ENCODE measurements at regions of chr1 and their contacts with region 1.

Region 1: DNA sequence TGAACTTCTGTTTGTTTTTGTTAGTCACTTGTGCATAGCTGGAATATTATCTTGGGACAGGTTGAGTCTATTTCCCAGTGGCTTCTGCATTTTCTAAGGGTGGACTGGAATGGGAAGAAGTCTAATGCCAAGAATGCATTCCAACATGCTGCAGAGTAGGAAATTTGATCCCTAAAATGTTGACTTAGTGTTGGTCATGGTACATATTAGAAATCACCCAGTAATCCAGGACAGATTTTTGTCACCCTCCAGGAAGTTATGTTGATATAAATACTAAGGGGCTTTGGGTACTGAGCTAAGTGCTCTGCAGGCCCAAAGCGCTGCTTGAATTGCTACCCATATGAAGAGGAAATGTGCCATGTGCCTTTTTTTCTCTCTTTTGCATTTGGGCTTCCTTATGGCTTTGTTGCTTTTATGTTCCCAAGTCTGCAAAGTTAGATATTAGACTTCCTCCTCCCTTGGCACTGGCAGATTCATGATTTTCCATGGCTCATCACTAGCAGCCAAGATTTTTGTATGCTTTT is 10.0 kb downstream of the ARID1A start:
- DNase-seq: no peak
- ATAC-seq: peak; percentile 40 to 70 (median 53)
- H3K4me3 ChIP-seq: peak overlapping the region in 2 of 3 donors; percentile 16 to 21
- H3K27ac ChIP-seq: peak overlapping the region; percentile 62 to 84 (median 82)
- H3K4me1 ChIP-seq: peaks cover 0 to 64% (median 29%) of the 10 kb centered on the region in 4 donors
- H3K27me3 ChIP-seq: no peaks in the 10 kb centered on the region
- CTCF ChIP-seq: no peak
- POLR2A ChIP-seq: no peak

Region 2: GRCh38 chr1:26618561-26618960 is 87.3 kb before region 1 on chr1:
- intact Hi-C with region 1: no loop called
- DNase-seq: no peak
- ATAC-seq: no peak
- H3K4me3 ChIP-seq: no peak overlapping the region
- H3K27ac ChIP-seq: peak overlapping the region in 1 of 3 donors; percentile 98
- H3K4me1 ChIP-seq: peaks cover 0 to 10% (median 5%) of the 10 kb centered on the region in 4 donors
- H3K27me3 ChIP-seq: no peaks in the 10 kb centered on the region
- CTCF ChIP-seq: no peak
- POLR2A ChIP-seq: no peak

Region 3: DNA sequence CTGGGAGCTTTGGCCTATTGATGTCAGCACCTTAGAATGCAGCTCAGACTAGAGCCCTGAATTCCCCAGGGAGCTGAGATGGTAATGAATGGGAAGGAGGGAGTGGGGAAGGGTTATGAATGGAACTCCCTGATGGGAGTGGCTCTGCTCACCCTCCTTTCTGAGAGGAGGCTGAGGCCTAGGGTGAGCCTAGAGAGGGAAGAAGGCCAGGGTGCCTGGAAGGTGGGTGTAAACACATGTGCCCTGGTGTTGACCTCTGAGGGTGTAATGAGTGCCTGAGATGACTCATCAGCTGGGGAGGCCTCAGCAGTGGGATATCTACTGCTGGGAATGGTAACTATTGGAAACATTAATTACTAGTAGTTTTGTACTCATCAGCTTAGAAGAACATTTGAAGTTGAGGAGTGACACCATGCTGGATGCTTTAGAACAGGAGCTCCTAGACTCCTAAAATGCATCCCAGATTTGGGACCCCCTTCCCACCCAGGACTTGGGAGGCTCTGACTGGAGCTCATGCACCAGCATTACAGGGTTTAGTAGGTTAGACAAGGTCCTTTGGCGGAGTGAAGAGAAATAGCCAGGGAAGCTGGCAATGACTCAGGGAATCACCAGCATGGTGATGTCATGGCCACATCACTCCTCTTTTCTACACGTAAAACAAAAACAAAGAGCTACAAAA is 65.9 kb after region 1 on chr1:
- intact Hi-C with region 1: loop called in 1 of 2 experiments (anchors 10 kb)
- DNase-seq: peak in 1 of 3 donors; percentile 62
- ATAC-seq: peak; percentile 56 to 95 (median 80)
- H3K4me3 ChIP-seq: no peak overlapping the region
- H3K27ac ChIP-seq: peak overlapping the region in 2 of 3 donors; percentile 39 to 40
- H3K4me1 ChIP-seq: peaks cover 0 to 13% (median 4%) of the 10 kb centered on the region in 4 donors
- H3K27me3 ChIP-seq: no peaks in the 10 kb centered on the region
- CTCF ChIP-seq: no peak
- POLR2A ChIP-seq: no peak

Region 4: DNA sequence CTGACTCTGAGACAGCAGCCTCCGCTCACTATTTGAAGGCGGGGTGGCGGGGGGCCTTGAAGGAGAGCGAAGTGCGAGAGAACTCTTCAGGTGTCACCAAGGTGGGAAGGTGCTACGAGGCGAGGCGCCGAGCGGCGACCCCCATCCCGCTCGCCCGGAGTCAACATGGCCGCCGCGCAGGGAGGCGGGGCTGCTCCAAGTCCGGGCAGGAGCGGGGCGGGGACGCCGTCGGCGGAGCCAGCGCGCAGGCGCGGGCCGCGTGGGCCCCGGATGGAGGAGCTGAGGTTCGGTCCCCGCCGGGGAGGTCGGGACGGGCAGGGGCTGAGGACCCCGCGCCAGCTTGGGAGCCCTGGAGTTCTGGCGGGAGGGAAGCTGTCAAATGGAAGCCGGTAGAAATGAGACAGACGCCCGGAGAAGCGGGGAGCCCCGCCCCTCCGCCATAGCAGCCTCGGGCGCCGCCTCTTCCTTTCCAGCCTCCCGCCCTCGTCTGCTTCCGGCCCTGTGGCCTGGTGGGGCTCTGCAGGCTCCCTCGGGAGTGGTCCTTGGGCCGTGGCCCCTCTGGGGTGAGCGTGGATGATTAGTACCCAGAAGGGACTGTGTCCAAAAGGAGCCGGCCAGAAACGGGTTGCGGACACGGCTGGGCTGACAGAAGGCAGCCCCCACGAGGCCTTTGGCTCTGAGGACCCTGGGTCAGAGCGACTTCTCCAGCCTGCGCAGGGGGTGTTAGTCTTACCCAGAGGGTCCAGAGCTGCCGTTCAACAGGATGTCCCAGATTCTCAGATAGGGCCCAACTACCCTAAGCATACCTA is 82.1 kb after region 1 on chr1 and contains the start of gene PIGV:
- intact Hi-C with region 1: loop called in 1 of 2 experiments (anchors 10 kb)
- DNase-seq: peak; percentile 90 to 91 (median 90)
- ATAC-seq: peak; percentile 67 to 77 (median 71)
- H3K4me3 ChIP-seq: peak within 1 kb of the TSS; percentile 65 to 84 (median 76)
- H3K27ac ChIP-seq: peak within 1 kb of the TSS; percentile 97 to 100 (median 100)
- H3K4me1 ChIP-seq: peaks cover 0 to 46% (median 24%) of the 10 kb centered on the region in 4 donors
- H3K27me3 ChIP-seq: no peaks in the 10 kb centered on the region
- CTCF ChIP-seq: peak in 2 of 4 donors; percentile 8 to 26
- POLR2A ChIP-seq: peak; percentile 80
- total RNA-seq, gene PIGV: 13.2 to 27.8 (median 19.2) TPM